Naive thymus-derived CD4-positive, alpha-beta T cell (primary cell): ENCODE measurements at regions of chr1 and their contacts with region 1.

Region 1: DNA sequence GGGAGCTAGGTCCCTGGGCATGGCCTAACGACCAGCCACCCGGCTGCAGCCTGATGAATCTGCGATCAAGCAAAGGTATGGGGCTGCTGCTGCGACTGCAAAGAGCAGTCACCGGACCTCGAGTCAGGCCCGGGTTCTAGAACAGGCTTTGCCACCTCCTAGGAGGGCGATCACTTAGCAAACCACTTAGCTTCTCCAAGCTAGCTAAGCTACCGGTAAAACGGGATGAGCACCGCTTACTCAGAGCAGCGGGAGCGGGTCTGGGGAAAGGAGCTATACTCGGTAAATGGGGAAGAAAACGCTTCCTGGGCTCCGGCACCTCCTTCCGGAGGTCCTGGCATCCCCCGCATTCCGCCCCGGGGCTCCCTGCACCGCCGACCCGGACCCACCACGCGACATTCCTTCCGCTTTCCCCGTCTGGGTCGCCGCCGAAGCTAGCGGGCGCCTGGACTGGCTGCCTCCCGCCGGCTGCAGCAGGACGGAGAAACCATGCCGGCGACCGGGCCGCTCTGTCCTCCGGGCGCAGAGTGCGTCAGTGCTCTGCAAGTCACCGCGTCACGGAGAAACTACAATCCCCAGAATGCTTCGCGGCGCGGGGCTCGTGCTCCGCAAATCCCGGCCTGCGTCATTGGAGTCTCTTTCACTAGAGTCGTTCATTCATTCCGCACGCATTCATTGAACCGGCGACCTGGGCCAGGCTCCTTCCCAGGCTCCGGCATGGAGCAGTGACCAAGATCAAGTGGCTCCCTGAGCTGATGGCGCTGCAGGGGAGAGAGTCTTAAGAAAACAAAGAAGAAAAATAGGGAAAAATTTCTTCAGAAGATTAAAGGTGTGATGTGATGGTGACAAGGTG is at the start of gene LSM10:
- DNase-seq: peak; percentile 71 to 92 (median 83)
- ATAC-seq: peak; percentile 77
- H3K4me3 ChIP-seq: peak within 1 kb of the TSS; percentile 88
- H3K4me3 Mint-ChIP-seq: peak within 1 kb of the TSS; percentile 87 to 100 (median 97)
- H3K27ac ChIP-seq: peak within 1 kb of the TSS; percentile 89
- H3K27ac Mint-ChIP-seq: peak within 1 kb of the TSS; percentile 82 to 100 (median 99)
- H3K4me1 ChIP-seq: peaks cover 13 to 16% of the 10 kb centered on the region in 2 donors
- H3K4me1 Mint-ChIP-seq: peaks cover 19 to 48% (median 34%) of the 10 kb centered on the region in 7 donors
- H3K27me3 ChIP-seq: no peaks in the 10 kb centered on the region
- H3K27me3 Mint-ChIP-seq: no peaks in the 10 kb centered on the region
- total RNA-seq, gene LSM10: 21.9 to 49.7 (median 35.7) TPM

Region 2: DNA sequence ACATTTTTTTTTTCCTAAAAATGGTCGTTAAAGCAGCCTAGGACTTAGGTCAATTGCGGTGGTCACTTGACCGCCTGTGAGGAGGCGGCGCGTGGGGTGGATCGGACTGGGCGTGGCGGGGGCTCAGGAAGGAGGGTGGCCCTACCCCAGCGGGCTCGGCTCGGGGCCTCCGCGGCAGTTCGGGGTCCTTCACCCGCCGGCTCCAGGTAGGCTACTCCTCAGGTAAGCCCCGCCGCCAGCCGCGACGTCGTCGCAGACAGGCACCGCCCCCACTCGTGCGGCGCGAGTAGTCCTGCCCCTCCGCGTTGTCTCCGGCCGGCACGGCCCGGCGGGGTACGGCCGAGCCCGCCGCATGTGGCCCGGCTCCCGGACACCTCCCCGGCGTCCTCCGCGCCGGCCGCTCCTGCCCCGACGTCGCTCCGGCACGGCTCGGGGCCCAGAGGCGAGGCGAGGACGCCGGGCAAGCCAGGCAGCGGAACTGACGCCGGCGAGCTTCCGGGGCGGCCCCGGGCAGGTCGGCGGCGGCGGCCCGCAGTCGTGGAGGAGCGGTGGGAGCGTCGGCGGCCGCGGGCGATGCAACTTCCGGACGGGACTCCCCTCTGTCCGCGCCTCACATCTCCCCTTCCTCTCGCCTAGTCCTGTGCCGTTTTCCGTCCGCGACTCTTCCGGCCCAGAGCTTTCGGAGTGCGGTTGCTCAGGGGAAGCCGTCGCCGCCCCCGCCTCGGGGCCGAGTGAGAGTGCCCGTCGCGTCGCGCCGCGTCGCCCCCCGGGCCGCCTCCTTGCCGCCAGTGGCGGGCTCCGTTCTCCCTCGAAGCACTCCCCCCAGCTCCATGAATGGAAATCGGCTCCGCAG is 466.8 kb before region 1 on chr1 and contains the start of gene AGO3:
- CTCF ChIA-PET with region 1: no interaction called
- POLR2A ChIA-PET with region 1: no interaction called
- intact Hi-C with region 1: loop called in 1 of 2 experiments (anchors 5 kb)
- DNase-seq: peak; percentile 79 to 90 (median 86)
- ATAC-seq: peak; percentile 91
- H3K4me3 ChIP-seq: peak within 1 kb of the TSS; percentile 93
- H3K4me3 Mint-ChIP-seq: peak within 1 kb of the TSS; percentile 84 to 97 (median 92)
- H3K27ac ChIP-seq: peak within 1 kb of the TSS; percentile 95
- H3K27ac Mint-ChIP-seq: peak within 1 kb of the TSS; percentile 94 to 98 (median 96)
- H3K4me1 ChIP-seq: peaks cover 21 to 22% of the 10 kb centered on the region in 2 donors
- H3K4me1 Mint-ChIP-seq: peaks cover 14 to 46% (median 44%) of the 10 kb centered on the region in 7 donors
- H3K27me3 ChIP-seq: no peaks in the 10 kb centered on the region
- H3K27me3 Mint-ChIP-seq: no peaks in the 10 kb centered on the region
- total RNA-seq, gene AGO3: 27.2 to 49.2 (median 39.4) TPM

Region 3: DNA sequence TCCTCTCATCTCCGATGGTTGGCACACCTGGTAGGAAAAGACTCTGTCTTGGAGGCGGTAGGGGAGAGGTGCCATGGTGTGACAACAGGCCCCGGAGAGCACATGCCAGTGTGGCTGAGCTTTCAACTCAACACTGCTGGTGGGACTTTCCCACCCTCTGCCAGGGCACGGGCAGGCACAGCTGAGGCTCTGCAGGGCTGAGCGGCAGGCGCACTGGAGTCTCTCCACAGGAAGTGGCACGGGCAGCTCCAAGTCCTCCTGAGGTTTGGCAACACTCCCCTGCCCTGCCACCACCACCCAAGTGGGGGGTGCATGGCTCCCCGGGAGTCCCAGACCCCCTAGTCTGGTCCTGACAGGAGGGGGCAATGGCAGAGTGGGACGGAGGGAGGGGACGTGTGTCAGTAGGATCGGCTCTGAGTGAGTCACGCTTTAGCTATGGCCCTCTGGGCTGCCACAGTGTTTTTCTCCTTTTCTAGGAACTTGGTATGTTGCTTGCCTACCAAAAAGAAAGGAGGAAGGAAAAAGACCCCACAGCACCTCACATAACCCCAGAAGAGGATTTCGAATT is 46.9 kb before region 1 on chr1:
- CTCF ChIA-PET with region 1: interaction called, 5 read pairs
- POLR2A ChIA-PET with region 1: interaction called, 11 read pairs
- intact Hi-C with region 1: loop called in 1 of 2 experiments (anchors 1 kb)
- DNase-seq: peak in 8 of 9 donors; percentile 43 to 75 (median 52)
- ATAC-seq: peak; percentile 96
- H3K4me3 ChIP-seq: no peak overlapping the region
- H3K4me3 Mint-ChIP-seq: peak overlapping the region; percentile 17 to 74 (median 50)
- H3K27ac ChIP-seq: peak overlapping the region; percentile 50
- H3K27ac Mint-ChIP-seq: peak overlapping the region; percentile 75 to 94 (median 87)
- H3K4me1 ChIP-seq: peaks cover 4 to 22% of the 10 kb centered on the region in 2 donors
- H3K4me1 Mint-ChIP-seq: peaks cover 6 to 38% (median 33%) of the 10 kb centered on the region in 7 donors
- H3K27me3 ChIP-seq: no peaks in the 10 kb centered on the region
- H3K27me3 Mint-ChIP-seq: no peaks in the 10 kb centered on the region

Region 4: DNA sequence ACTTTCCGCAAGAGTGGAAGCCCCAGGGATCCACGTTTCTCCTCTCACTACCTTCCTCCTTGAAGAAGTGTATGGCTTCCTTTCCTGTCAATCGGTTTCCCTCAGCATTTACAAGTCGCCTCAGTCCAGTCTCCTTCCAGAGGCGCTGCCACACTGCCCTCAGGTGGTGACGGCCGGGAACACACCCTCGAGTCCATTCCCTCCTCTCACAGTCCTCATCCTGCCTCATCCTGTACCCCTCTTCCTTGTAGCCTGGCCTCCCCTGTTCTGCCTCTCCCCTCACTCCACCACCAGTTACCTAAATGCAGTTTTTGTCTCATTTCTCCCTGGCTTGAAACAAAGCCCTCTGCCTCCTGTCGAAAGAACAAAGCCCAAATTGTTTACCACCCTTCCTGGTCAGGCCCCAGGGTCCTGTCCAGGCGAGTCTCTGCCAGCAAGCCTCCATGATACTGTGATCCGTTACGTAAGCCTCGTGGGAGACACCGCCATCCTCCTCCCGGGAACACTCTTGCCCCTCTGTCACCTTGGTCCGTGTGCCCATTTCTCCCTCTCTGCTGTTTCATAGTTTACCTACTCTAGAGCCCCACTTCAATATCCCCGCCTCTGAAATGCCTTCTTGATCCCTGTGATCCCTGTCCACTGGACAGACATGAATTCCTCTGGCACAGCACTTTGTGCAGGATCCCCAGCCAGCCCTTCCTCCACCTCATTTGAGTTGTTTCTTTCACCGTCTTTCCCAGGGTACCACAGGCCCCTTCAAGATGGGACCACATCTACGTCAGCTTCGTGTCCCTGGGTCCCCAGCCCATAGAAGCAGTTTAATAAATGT is 23.4 kb after region 1 on chr1:
- CTCF ChIA-PET with region 1: interaction called, 3 read pairs
- POLR2A ChIA-PET with region 1: interaction called, 7 read pairs
- intact Hi-C with region 1: loop called in 1 of 2 experiments (anchors 1 kb)
- DNase-seq: peak; percentile 80 to 92 (median 89)
- ATAC-seq: peak; percentile 100
- H3K4me3 ChIP-seq: peak overlapping the region; percentile 17
- H3K4me3 Mint-ChIP-seq: peak overlapping the region; percentile 64 to 85 (median 77)
- H3K27ac ChIP-seq: peak overlapping the region; percentile 65
- H3K27ac Mint-ChIP-seq: peak overlapping the region; percentile 74 to 98 (median 93)
- H3K4me1 ChIP-seq: peaks cover 10 to 19% of the 10 kb centered on the region in 2 donors
- H3K4me1 Mint-ChIP-seq: peaks cover 11 to 37% (median 33%) of the 10 kb centered on the region in 7 donors
- H3K27me3 ChIP-seq: no peaks in the 10 kb centered on the region
- H3K27me3 Mint-ChIP-seq: no peaks in the 10 kb centered on the region

Region 5: DNA sequence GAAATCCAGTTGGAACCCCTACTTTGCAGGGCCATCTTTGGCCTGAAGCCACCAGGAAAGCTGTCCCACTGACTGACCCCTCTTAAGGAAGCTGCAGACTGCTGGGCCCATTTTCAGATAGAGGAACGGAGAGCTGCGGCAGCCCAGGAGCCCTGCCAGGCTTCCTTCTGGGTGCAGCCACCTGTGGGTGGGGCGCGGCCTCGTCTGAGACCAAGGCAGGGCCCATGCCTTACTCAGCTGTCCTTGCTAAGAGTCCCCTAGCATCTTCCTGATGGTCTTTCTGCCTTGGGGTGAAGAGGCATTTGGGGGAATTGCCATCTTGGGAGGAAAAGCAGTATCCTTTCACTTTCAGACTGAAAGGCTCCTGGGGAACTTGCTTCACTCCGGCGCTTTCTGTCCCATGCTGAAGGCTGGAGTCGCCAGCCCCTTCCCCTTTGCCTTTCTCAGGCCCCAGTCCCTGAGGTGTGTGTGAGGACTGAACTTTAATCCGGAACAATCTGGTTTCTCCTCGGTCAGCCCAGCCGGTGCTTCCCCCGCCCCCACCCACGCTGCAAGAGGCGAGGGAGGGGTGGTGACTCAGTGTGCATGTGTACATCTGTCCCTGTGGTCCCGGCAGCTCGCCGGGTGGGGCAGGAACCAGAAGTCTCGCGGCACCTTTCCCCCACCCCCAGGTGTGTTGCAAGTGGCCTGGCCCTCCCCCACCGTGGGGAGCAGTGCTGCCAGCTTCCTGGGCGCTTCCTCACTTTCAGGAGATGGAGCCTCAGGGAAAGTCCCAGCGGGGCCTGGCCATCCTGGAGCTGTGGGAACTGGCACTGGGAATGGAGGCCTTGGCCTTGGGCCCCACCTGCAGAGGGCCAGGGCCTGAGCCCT is 1081.9 kb after region 1 on chr1:
- CTCF ChIA-PET with region 1: no interaction called
- POLR2A ChIA-PET with region 1: no interaction called
- intact Hi-C with region 1: loop called in 1 of 2 experiments (anchors 2 kb)
- DNase-seq: peak in 8 of 9 donors; percentile 54 to 90 (median 63)
- ATAC-seq: peak; percentile 69
- H3K4me3 ChIP-seq: peak overlapping the region; percentile 87
- H3K4me3 Mint-ChIP-seq: peak overlapping the region; percentile 91 to 99 (median 96)
- H3K27ac ChIP-seq: peak overlapping the region; percentile 95
- H3K27ac Mint-ChIP-seq: peak overlapping the region; percentile 96 to 99 (median 98)
- H3K4me1 ChIP-seq: peaks cover 26% of the 10 kb centered on the region in 2 donors
- H3K4me1 Mint-ChIP-seq: peaks cover 21 to 50% (median 34%) of the 10 kb centered on the region in 7 donors
- H3K27me3 ChIP-seq: no peaks in the 10 kb centered on the region
- H3K27me3 Mint-ChIP-seq: no peaks in the 10 kb centered on the region